ENCODE measurements at regions of chr20 and their contacts with region 1.

Region 1: DNA sequence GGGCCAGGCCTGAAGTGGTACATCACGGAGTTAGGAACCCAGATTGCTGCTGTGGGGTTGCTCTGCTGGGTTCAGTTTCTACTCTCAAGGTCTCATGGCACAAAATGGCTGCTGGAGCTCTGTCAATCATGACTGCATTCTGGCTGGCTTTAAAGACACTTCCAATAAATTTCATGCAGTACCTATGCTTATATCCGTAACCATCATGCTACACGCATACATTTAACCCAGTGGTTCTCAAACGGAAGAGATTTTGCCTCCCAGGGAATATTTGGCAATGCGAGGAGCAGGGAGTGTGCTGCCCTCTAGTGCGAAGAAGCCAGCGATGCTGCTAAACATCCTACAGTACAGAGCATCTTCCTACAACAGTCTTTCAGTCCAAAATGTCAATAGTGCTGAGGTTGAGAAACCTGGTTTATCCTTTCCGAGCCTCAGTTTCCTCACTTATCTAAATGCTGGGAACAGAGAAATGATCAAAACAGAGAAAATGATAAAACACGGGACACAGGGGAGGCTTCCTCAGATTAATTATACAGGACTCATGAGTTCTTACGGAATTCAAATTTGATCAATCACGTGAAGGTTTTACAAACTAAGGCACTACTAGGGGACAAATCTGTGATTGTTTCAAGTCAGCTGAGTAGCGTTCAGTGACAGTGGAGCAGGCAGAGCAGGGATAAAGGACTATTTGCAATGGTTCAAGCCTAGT is 9.6 kb upstream of the SLC2A10 start:
- DNase-seq: no peak
- H3K4me3 ChIP-seq: no peak overlapping the region
- CTCF ChIP-seq: peak; percentile 73

Region 2: DNA sequence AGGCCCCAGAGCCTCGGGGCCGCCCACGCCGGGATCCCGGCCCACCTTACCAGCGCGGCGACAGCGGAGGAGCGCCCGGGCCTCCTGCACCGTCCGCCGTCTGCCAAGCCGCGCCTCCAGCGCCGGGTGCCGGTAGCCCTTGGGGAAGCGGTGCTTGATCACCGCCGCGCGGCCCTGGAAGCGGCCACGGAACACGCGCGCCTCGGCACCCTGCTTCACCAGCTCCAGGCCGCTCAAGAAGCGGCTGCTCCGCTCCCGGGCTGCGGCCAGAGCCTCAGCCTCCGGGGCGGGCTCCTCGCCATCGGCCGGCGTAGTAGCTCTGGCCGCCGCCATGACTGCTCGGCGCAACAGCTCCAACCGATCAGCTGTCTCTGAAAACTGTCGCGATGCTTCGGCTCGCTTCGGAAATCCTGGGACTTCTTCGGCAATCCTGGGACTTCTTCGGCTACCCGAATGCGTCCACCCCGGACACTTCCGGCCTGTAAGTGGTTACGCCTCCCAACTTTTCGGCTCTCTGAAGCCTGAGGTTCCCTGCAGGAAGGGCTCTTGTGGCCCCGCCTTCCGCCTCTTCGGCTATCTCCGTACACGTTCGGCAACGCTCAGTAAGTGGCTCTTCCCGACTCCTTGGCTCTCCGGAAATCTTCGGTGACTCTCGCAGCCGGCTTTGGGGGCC is 10.6 kb before region 1 on chr20 and contains the start of gene TP53RK:
- CTCF ChIA-PET with region 1: interaction called, 21 read pairs
- POLR2A ChIA-PET with region 1: no interaction called
- DNase-seq: peak; percentile 99
- H3K4me3 ChIP-seq: peak within 1 kb of the TSS; percentile 83
- CTCF ChIP-seq: peak; percentile 25